ENCODE measurements at regions of chr15 and their contacts with region 1.

Region 1: DNA sequence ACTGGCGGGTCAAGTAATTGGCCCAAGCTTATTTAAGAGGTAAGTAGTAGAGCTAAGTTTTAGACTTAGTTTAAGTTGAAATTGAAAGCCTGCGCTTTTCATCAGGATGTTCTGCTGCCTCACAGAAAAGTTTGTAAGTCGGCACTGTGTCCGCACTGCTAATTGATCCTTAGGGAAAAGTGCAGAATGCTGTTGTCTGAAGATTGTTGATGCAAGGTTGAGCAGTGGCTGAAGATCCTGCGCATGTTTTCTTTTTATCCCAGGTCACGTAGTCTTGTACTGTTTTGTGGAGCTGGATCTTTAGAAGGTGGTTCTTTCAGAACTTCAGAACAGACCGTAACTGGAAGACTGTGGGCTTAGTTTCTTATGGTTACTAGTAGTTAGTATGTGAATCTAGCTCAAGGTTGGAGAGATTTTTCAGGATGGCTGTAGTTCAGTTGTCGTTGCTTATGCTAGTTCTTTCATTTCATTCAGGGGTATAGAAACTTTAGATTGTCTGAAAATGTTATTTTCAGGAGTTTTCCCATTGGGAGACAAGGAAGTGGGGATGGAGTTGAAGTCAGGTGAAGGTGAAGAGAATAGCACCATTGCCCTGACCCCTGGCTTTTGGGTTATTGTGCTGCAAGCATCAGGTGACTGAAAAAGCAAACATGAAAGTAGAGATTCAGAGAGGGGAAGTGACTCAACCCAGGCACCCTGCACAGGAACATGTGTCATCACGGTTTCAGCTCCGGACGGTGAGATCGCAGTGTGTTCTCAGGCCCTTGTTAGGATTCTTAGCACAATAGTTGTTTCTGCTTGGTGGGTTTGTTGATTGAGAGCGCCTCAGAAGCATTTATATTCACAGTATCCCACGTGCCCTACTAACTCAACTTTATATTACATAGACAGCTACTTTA is 32.8 kb downstream of the AKAP13 start:
- DNase-seq: peak; percentile 39 to 61 (median 47)
- ATAC-seq: peak; percentile 74 to 92
- H3K4me3 ChIP-seq: peak overlapping the region; percentile 12
- H3K27ac ChIP-seq: no peak overlapping the region
- H3K4me1 ChIP-seq: peaks cover 3% of the 10 kb centered on the region
- H3K27me3 ChIP-seq: no peaks in the 10 kb centered on the region

Region 2: GRCh38 chr15:85296615-85297402 is 116.4 kb before region 1 on chr15:
- intact Hi-C with region 1: loop called in 1 of 4 experiments (anchors 10 kb)
- DNase-seq: peak in 2 of 3 donors; percentile 46 to 72
- ATAC-seq: peak; percentile 93 to 94
- H3K4me3 ChIP-seq: peak overlapping the region; percentile 46
- H3K27ac ChIP-seq: no peak overlapping the region
- H3K4me1 ChIP-seq: no peaks in the 10 kb centered on the region
- H3K27me3 ChIP-seq: no peaks in the 10 kb centered on the region

Region 3: GRCh38 chr15:85330901-85331588 is 82.2 kb before region 1 on chr15:
- intact Hi-C with region 1: loop called in 1 of 4 experiments (anchors 10 kb)
- DNase-seq: peak; percentile 87 to 95 (median 89)
- ATAC-seq: peak; percentile 95
- H3K4me3 ChIP-seq: no peak overlapping the region
- H3K27ac ChIP-seq: peak overlapping the region; percentile 94
- H3K4me1 ChIP-seq: peaks cover 9% of the 10 kb centered on the region
- H3K27me3 ChIP-seq: no peaks in the 10 kb centered on the region

Measured in right cardiac atrium (tissue), 5 donors.